Activated CD4-positive, alpha-beta memory T cell treated with anti-CD3 and anti-CD28 coated beads for 36 hours (primary cell): ENCODE measurements at regions of chr5 and their contacts with region 1.

Region 1: DNA sequence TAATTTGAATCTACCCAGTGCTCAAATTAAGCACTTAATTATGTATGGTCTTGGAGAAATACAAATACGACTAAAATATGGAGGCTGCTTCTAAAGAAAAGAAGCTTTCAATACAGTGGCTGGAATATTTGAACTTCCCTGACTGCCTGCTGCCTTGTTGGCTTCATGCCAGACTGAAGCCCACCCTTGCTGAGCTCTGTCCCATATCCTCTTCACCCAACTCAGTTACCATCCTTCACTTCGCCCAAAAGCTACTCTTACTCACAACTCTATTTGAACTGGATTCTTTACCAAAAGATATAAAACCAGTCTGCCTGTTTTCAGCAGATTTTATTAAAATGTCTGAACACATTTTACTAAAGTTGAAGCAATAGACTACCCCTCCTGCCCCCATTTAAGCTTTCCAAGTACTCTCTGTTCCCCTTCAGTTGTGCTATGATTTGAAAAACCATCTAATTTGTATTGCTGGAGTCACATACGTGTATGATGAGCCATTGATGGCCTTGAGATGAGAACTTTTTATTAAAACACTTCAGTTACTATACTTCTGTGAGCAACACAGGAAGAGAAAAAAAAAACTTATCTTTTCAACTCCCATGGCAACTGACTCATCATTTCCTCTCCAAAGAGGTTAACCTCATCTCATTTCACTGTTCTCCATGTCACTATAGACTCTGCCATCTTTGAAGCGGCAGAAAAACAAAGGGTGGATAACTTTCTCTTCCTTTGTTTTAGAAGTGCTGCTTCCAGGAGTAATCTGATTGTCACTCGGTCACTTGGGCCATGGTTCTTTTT is 104.1 kb upstream of the PCSK1 start:
- DNase-seq: no peak
- H3K4me3 Mint-ChIP-seq: peak overlapping the region; percentile 2
- H3K27ac Mint-ChIP-seq: peak overlapping the region; percentile 68
- H3K4me1 Mint-ChIP-seq: peaks cover 33% of the 10 kb centered on the region
- H3K27me3 Mint-ChIP-seq: no peaks in the 10 kb centered on the region

Region 2: DNA sequence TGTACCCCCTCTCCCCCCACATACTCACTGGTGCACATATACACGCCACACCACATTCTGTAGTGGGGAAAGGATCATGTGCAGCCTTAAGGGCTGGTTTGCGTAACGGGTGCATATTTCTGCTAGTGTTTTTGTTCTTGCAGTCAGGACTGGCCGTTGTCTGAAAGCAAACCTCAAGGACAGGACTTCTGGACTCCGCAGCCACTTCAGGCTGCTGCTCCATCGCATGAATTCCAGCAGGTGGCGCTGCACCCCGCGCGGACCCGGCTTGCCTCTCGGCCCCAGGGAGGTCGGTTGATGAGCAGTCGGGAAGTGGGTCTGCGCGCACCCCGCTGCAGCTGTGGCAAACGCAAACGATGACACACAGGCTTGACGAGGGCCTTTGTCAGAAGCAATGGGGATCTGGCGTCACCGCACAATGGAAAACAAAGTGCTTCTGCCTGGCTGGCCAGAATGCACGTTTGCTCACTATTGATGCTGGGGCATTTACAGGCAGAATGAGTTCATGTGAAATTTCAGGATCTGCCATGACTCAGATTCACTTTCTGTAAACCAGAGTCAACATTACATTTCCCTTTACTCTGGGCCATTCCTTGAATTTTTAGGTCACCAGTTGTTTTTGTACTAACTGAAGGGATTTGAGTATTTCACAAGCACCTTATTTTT is 678.4 kb before region 1 on chr5:
- CTCF ChIA-PET with region 1: no interaction called
- POLR2A ChIA-PET with region 1: no interaction called
- intact Hi-C with region 1: loop called (anchors 2 kb)
- DNase-seq: peak; percentile 97
- H3K4me3 Mint-ChIP-seq: peak overlapping the region; percentile 40
- H3K27ac Mint-ChIP-seq: peak overlapping the region; percentile 68
- H3K4me1 Mint-ChIP-seq: peaks cover 55% of the 10 kb centered on the region
- H3K27me3 Mint-ChIP-seq: no peaks in the 10 kb centered on the region

Region 3: DNA sequence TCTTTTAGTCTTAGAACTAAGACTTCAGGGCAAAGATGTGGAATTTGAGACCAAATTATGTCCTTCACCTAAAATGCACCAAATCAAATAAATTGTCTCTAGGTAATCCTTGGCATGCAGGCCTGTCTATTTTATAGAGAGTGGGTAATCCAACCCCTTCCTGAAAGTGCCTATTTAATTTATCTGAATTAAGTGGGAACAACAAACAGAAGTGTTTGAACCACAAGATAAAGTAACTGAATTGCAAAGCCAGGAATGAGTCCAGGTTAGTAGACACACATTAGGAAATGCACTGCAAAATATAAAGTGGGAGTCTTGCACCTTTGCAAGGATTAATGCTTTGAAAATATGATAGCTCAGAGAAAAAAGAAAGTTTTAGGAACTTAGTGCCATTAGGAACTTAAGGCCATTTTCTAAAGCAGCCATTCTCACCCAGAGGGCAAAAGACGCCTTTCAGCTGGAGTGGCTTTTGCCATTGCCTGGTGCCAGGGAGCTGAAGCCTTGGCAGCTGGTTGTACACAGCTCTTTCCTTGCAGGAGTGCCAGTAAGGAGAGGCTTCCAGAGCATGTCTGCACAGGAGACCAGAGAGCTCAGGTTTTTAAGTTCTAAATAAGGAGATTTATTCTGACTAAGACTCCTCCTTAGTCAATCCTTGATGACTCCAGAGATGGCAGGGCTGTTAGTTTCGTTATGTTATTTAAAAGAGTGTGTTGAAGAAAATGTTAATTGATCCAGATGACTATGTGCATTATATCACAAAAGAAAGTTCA is 423.8 kb before region 1 on chr5:
- CTCF ChIA-PET with region 1: no interaction called
- POLR2A ChIA-PET with region 1: no interaction called
- intact Hi-C with region 1: loop called (anchors 2 kb)
- DNase-seq: peak; percentile 13
- H3K4me3 Mint-ChIP-seq: no peak overlapping the region
- H3K27ac Mint-ChIP-seq: no peak overlapping the region
- H3K4me1 Mint-ChIP-seq: peaks cover 41% of the 10 kb centered on the region
- H3K27me3 Mint-ChIP-seq: peaks cover 4% of the 10 kb centered on the region

Region 4: GRCh38 chr5:96344678-96345577 is 192.3 kb before region 1 on chr5:
- CTCF ChIA-PET with region 1: no interaction called
- POLR2A ChIA-PET with region 1: no interaction called
- intact Hi-C with region 1: loop called (anchors 2 kb)
- DNase-seq: no peak
- H3K4me3 Mint-ChIP-seq: no peak overlapping the region
- H3K27ac Mint-ChIP-seq: no peak overlapping the region
- H3K4me1 Mint-ChIP-seq: peaks cover 27% of the 10 kb centered on the region
- H3K27me3 Mint-ChIP-seq: peaks cover 26% of the 10 kb centered on the region

Region 5: DNA sequence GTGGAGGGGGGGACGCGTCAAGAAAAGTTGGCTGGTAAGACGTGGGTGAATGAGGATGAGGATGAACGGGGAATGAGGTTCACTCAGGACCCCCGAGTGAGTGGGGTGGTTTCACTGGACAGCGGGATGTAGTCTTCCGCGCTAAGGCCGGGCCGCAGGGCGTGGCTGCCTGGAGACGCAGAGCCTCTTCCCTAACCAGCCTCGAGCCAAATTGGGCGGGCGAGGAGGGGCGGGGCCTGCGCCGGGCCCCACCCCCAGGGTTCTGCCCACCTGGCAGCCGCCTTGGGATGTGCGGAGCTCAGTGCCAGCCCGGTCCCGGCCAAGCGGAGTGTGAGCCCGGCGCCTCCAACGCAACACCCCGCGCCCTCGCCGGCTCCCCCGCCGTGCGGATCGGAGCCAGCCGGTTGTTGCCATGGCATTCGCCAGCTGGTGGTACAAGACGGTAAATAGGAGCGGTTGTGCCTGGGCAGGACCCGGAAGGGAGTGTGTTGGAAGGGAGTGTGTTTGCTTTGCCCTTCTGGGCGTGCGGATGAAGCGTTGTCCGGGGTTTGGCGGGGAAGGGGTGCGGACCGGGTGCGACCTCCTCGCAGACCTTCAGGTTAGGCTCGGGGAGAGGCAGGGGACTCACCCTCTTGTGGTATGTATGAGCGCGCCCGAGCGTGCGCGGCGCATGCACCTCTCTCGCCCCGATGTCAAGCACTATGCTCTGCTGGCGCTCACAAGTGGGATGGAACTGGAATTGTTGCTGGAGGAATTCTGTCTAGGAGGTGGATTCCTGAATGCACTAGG is 125.7 kb after region 1 on chr5:
- CTCF ChIA-PET with region 1: no interaction called
- POLR2A ChIA-PET with region 1: interaction called, 3 read pairs
- intact Hi-C with region 1: loop called (anchors 1 kb)
- DNase-seq: peak; percentile 94
- H3K4me3 Mint-ChIP-seq: peak overlapping the region; percentile 99
- H3K27ac Mint-ChIP-seq: peak overlapping the region; percentile 98
- H3K4me1 Mint-ChIP-seq: peaks cover 45% of the 10 kb centered on the region
- H3K27me3 Mint-ChIP-seq: peaks cover 14% of the 10 kb centered on the region

Region 6: DNA sequence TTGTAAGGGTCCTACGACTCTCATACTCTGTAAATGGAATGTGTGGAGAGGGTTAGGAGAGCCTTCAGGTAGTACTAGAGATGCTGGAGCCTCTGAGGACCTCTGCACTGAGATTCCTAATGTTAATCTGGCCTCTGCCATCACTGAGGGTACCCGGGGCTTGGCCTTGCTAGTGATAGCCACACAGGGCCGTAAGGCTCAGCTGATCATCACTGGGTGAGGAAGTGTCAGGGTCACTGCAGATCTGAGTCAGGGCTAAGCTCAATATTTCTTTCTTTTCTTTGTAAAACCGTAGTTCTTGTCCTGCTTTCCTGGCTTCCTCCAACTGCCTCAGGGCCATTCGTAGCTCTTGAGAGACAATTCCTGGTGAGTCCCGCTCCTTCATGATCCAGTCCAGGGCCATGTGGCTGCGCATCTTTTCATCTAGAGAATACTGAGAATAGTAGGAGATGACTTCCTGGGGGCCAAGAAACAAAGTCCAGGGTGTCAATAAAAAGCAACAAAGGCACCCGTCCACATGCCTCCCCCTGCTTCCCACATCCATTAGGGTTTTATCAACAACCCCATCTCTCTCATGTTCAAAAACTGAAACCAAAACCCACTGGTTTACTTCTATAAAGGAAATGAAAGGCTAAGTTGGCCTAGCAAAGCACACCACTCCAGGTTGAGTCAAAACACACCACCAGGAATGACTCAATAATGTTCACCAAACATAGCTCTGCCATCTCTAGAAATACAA is 557.6 kb after region 1 on chr5:
- CTCF ChIA-PET with region 1: no interaction called
- POLR2A ChIA-PET with region 1: no interaction called
- intact Hi-C with region 1: loop called (anchors 1 kb)
- DNase-seq: peak; percentile 56
- H3K4me3 Mint-ChIP-seq: peak overlapping the region; percentile 4
- H3K27ac Mint-ChIP-seq: no peak overlapping the region
- H3K4me1 Mint-ChIP-seq: peaks cover 15% of the 10 kb centered on the region
- H3K27me3 Mint-ChIP-seq: peaks cover 14% of the 10 kb centered on the region